ENCODE measurements at regions of chr5 and their contacts with region 1.

Region 1: DNA sequence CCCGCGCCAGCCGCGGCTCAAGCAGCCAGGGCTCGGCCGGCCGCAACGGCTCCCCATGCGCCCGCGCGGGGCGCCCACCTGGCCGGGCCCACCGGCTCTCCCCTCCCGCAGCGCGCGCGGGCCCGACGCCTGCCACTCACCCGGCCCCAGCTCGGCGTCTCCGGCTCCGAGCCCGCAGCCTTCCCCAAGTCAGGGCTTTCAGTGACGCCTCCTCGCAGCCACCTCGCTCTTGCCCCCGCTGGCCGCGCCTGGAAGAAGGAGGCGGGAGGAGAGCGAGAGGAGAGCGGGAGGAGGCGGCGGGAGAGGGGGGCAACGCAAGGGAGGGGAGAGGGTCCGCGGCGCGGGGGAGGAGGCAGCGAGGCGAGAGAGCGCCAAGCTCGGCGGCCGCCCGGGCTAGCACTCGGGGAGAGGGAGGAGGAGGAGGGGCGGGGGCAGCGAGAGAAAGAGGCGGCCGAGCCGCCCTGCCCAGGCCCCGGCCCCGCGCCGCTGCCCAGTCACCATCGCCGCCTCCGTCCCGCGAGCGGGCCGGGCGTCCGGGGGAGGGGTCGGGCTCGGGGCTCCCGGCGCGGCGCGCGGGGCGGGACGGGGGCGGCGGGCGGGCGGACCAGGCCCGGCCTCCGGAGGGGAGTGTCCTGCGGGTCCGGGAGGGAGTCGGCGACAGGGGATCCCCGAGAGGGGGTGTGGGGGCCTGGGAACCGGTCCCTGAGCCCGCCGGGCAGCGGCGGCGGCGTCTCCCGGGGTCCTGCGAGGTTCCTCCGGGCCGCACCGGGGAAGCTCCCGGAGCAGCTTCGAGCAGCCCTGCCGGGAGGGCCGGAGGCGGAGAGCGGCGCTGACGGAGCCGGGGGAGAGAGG is at the start of gene LHFPL2:
- DNase-seq: no peak
- H3K4me3 ChIP-seq: peak within 1 kb of the TSS; percentile 95
- H3K27ac ChIP-seq: peak within 1 kb of the TSS; percentile 82
- H3K27me3 ChIP-seq: no peaks in the 10 kb centered on the region
- CTCF ChIP-seq: no peak
- polyA plus RNA-seq, gene LHFPL2: 19.4 and 20.1 TPM in 2 replicates

Region 2: DNA sequence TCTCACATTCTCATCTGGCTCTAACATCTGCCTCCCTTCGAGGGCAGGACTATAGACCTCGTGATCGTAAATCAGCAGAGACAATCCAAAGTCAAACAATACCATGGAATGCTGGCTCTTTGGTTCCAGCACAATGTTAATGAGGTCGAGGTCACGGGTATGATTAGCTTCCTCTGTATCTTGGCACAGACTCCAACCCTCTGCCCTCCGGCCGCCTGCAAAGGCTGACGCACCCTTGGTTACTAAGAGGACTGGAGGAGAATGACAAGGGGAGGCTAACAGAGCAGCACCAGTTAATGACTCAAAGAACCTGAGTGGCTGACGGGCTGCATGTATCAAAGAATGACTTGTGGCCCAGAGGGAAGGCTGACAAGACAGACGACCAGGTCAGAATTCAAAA is 10.2 kb before region 1 on chr5:
- CTCF ChIA-PET with region 1: no interaction called
- POLR2A ChIA-PET with region 1: interaction called, 11 read pairs
- DNase-seq: peak; percentile 68
- H3K4me3 ChIP-seq: no peak overlapping the region
- H3K27ac ChIP-seq: peak overlapping the region; percentile 63
- H3K27me3 ChIP-seq: no peaks in the 10 kb centered on the region
- CTCF ChIP-seq: no peak